Psoas muscle (tissue), 8 donors: ENCODE measurements at regions of chr1 and their contacts with region 1.

Region 1: DNA sequence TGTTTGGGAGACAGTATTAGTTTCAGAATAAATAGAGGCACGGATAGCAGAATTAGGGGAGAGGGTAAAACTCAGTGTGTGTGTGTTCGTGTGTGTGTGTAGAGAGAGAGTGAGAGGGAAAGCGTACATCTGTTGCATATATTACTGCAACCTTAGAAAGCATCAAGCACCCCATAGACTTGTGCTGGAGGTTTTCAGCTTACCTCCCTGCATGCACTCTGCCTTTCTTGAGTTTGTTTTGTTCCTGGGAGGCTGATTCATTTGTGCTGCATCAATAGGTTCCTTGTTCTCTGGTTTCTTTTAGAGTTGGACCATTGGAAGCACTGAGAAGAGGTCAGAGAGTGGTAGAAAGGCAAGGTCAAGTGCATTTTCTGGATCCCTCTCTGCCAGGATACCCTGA is 104.4 kb upstream of the KCNK1 start:
- DNase-seq: no peak
- ATAC-seq: no peak
- H3K4me3 ChIP-seq: no peak overlapping the region
- H3K27ac ChIP-seq: no peak overlapping the region
- H3K4me1 ChIP-seq: no peaks in the 10 kb centered on the region
- H3K27me3 ChIP-seq: peaks cover 0 to 2% (median 0%) of the 10 kb centered on the region in 3 donors
- CTCF ChIP-seq: no peak

Region 2: DNA sequence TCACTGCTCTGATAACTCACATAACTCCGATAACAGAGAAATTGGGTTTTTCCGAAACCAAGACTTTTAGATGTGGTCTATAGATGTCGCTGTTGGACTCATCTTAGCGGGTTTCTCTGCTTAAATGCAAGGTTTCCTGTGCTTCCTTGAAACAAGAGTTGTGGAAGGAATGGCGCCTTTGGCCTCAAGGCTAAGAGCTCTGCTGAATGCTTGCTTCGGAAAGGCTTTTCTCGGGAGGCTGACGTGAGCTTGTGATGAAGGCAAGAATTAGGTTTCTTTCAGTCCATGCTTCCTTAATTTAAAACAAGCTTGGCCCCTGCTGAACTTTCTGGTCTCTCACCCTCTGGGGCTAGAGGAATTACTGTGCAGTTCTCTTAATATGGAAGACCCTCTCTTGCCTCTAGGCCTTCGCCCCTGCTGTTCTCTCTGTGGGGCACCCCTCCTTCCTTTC is 68.5 kb before region 1 on chr1:
- intact Hi-C with region 1: loop called in 1 of 2 experiments (anchors 10 kb)
- DNase-seq: no peak
- ATAC-seq: no peak
- H3K4me3 ChIP-seq: no peak overlapping the region
- H3K27ac ChIP-seq: no peak overlapping the region
- H3K4me1 ChIP-seq: no peaks in the 10 kb centered on the region
- H3K27me3 ChIP-seq: no peaks in the 10 kb centered on the region
- CTCF ChIP-seq: peak; percentile 38